Activated CD8-positive, alpha-beta memory T cell treated with anti-CD3 and anti-CD28 coated beads, Interleukin-2, amount 10 ng/mL, durations not matched to agents 7 days and 5 days (primary cell): ENCODE measurements at regions of chr17 and their contacts with region 1.

Region 1: GRCh38 chr17:66567234-66568170 is 265.1 kb downstream of the PRKCA start:
- DNase-seq: peak; percentile 84
- ATAC-seq: peak; percentile 84
- H3K4me3 Mint-ChIP-seq: no peak overlapping the region
- H3K27ac Mint-ChIP-seq: no peak overlapping the region
- H3K4me1 Mint-ChIP-seq: peaks cover 7% of the 10 kb centered on the region
- H3K27me3 Mint-ChIP-seq: no peaks in the 10 kb centered on the region

Region 2: DNA sequence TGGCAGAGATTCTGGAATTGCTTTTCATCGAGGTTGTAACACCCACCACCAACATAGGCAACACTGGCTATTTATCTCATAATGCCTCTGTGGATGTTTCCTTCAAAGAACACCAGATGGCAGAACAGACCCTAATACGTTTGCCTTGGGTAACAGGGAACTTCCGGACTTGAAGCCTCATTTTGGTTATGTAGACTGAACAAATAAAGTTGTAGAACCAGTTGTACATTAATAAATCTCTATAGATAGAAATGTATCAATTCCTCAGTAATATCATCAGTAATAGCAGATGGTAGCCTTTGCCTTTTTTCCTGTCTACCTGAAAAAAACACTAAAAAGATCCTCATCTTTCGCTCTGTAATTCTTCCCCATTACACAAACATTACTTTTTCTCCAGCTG is 312.4 kb before region 1 on chr17:
- CTCF ChIA-PET with region 1: interaction called, 10 read pairs
- DNase-seq: peak; percentile 49
- ATAC-seq: peak; percentile 97
- H3K4me3 Mint-ChIP-seq: peak overlapping the region; percentile 12
- H3K27ac Mint-ChIP-seq: peak overlapping the region; percentile 80
- H3K4me1 Mint-ChIP-seq: peaks cover 13% of the 10 kb centered on the region
- H3K27me3 Mint-ChIP-seq: no peaks in the 10 kb centered on the region

Region 3: DNA sequence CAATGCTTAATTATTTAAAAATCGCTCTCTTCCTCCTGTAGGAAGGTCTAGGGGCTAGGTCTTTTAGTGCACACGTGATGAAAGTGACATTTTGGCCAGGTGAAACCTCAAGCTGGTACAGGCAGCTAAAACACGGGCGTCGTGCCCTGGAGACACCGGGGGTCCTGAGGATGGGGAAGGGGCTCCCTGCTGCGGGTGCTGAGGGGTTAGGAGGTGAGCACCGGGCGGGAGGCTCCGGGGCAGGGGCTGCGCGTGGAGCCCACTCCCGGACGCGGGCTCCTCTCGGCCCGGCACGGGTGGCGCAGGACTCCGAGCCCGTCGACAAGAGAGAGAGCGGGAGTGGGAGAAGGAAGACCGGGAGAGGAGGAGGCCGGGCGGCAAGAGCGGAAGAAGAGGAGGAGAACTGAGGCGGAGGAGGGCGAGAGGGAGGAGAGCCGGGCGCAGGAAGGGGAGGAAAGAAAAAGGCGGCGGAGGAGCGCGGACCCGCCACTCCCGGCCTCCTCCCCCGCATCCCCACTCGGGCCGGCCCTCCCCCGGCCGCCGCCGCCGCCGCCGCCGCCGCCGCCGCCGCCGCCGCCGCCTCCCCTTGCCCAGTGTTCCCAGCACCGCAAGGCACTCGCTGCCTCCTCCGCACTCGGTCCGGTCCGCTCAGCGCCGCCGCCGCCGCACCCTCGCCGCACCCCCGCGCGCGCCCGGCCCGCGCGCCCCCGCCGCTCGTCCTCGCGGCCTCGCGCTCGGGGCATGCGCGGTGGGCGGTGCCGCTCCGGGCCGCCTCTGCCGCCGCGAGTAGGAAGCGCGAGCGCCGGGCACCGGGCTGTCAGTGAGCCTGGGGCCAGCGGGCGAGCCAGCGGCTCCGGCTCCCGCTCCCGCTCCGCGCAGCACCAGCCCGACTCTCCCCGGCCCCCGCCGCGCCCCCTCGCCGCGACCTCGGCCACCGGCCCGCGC is 265.4 kb before region 1 on chr17 and contains the start of gene PRKCA:
- CTCF ChIA-PET with region 1: interaction called, 11 read pairs
- DNase-seq: peak; percentile 78
- ATAC-seq: peak; percentile 83
- H3K4me3 Mint-ChIP-seq: peak within 1 kb of the TSS; percentile 98
- H3K27ac Mint-ChIP-seq: peak within 1 kb of the TSS; percentile 88
- H3K4me1 Mint-ChIP-seq: peaks cover 46% of the 10 kb centered on the region
- H3K27me3 Mint-ChIP-seq: peaks cover 16% of the 10 kb centered on the region
- total RNA-seq, gene PRKCA: 63.1 to 68.9 TPM